PC-9 (cell line): ENCODE measurements at regions of chr7 and their contacts with region 1.

Region 1: GRCh38 chr7:64429232-64429631 is 115.5 kb downstream of the ZNF736 start:
- DNase-seq: no peak
- H3K4me3 ChIP-seq: no peak overlapping the region
- H3K27ac ChIP-seq: no peak overlapping the region
- H3K4me1 ChIP-seq: no peaks in the 10 kb centered on the region
- H3K27me3 ChIP-seq: no peaks in the 10 kb centered on the region
- CTCF ChIP-seq: no peak

Region 2: GRCh38 chr7:64359543-64359942 is 69.7 kb before region 1 on chr7:
- CTCF ChIA-PET with region 1: no interaction called
- POLR2A ChIA-PET with region 1: no interaction called
- intact Hi-C with region 1: loop called (anchors 2 kb)
- DNase-seq: no peak
- H3K4me3 ChIP-seq: no peak overlapping the region
- H3K27ac ChIP-seq: no peak overlapping the region
- H3K4me1 ChIP-seq: no peaks in the 10 kb centered on the region
- H3K27me3 ChIP-seq: no peaks in the 10 kb centered on the region
- CTCF ChIP-seq: no peak